Activated B cell treated with CpG ODN at 0.5 μM for 24 hours (primary cell): ENCODE measurements at regions of chr11 and their contacts with region 1.

Region 1: DNA sequence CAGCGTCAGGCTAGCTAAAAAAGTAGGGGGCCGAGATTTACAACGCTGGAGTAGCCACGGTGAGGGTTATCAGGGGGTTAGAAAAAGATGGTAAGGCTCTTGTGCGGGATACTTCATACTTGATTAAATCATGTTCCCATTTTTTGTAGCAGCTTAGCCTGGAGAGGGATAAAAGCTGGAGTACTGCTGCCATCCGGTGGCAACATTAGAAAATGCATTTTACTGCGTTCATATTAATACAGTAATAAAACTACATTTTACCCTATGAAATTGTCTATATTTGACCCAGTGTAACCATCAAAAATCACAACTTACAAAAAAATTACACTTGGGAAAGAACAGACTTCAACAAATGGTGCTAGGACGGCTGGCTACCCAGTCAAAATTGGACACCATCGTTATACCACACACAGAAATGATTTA is 17.3 kb downstream of the RPUSD4 start:
- DNase-seq: no peak
- ATAC-seq: peak; percentile 21
- H3K4me3 Mint-ChIP-seq: no peak overlapping the region
- H3K27ac Mint-ChIP-seq: no peak overlapping the region
- H3K4me1 Mint-ChIP-seq: peaks cover 3% of the 10 kb centered on the region
- H3K27me3 Mint-ChIP-seq: no peaks in the 10 kb centered on the region
- CTCF ChIP-seq: no peak

Region 2: DNA sequence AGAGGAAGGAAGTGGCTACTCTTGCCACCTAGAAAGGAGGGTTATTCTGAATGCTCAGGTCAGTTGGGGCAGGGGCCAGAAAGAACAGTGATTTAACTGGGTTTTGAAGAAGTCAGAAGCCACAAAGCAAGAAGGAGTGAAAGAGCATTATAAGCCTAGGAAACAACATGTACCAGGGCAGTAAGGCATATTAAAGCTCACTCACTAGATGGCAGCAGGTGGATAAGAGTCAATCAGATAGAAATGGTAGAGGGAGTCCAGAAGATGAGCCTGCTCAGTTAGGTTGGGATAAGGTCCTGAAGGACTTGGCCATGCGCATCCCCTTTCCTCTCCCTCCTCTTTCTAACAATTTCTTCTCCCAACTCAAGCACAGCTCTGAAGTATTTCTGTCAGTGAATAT is 470.0 kb before region 1 on chr11:
- CTCF ChIA-PET with region 1: no interaction called
- POLR2A ChIA-PET with region 1: no interaction called
- intact Hi-C with region 1: loop called (anchors 10 kb)
- DNase-seq: no peak
- ATAC-seq: no peak
- H3K4me3 Mint-ChIP-seq: no peak overlapping the region
- H3K27ac Mint-ChIP-seq: no peak overlapping the region
- H3K4me1 Mint-ChIP-seq: no peaks in the 10 kb centered on the region
- H3K27me3 Mint-ChIP-seq: peaks cover 14% of the 10 kb centered on the region
- CTCF ChIP-seq: no peak

Region 3: DNA sequence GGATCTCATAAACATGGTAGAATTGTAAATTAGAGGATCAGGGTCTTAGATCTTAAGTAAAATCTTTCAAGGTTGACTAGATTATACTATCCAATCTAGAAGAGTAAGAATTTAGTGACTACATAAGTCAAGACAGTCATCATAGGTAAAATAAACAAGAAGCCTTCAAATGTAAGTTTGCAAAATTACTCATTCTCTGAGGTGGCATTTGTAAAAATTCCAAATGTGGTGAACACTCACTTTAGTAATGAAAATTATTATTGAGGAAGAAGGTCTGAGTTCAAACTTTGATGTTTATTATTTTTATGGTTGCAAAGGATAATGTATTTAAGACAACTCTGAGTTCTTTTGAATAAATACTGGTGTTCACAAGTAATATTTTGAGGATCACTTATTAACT is 302.1 kb before region 1 on chr11:
- CTCF ChIA-PET with region 1: no interaction called
- POLR2A ChIA-PET with region 1: no interaction called
- intact Hi-C with region 1: no loop called
- DNase-seq: no peak
- ATAC-seq: no peak
- H3K4me3 Mint-ChIP-seq: no peak overlapping the region
- H3K27ac Mint-ChIP-seq: no peak overlapping the region
- H3K4me1 Mint-ChIP-seq: peaks cover 12% of the 10 kb centered on the region
- H3K27me3 Mint-ChIP-seq: peaks cover 3% of the 10 kb centered on the region
- CTCF ChIP-seq: no peak

Region 4: DNA sequence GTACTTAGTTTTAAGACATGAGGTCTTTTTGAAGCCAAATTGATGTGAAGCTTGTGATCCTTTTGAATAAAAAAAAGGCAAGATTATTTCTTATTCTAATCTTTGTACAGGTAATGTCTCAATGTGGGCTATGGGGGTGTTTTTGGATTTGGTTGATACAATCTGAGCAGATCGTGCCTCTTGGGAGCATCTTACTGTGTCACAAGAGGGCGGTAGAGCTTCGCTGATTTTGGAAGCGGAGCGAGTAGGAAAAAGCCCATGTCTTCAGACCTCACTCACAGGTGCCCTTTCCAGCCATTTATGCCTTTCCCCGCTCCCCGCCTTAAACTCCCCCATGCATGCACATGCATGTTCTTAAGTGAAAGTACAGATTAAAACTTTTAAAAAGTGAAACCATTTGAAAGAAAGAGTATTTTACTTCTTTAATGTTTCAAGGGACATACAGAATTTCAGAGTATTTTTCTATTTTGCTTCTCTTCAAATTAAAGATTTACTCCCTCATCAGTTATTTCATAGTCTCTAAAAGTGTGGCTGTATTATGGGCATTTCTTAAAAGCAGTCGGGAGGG is 271.0 kb before region 1 on chr11:
- CTCF ChIA-PET with region 1: interaction called, 7 read pairs
- POLR2A ChIA-PET with region 1: no interaction called
- intact Hi-C with region 1: loop called (anchors 1 kb)
- DNase-seq: no peak
- ATAC-seq: no peak
- H3K4me3 Mint-ChIP-seq: no peak overlapping the region
- H3K27ac Mint-ChIP-seq: no peak overlapping the region
- H3K4me1 Mint-ChIP-seq: no peaks in the 10 kb centered on the region
- H3K27me3 Mint-ChIP-seq: peaks cover 15% of the 10 kb centered on the region
- CTCF ChIP-seq: peak; percentile 21

Region 5: DNA sequence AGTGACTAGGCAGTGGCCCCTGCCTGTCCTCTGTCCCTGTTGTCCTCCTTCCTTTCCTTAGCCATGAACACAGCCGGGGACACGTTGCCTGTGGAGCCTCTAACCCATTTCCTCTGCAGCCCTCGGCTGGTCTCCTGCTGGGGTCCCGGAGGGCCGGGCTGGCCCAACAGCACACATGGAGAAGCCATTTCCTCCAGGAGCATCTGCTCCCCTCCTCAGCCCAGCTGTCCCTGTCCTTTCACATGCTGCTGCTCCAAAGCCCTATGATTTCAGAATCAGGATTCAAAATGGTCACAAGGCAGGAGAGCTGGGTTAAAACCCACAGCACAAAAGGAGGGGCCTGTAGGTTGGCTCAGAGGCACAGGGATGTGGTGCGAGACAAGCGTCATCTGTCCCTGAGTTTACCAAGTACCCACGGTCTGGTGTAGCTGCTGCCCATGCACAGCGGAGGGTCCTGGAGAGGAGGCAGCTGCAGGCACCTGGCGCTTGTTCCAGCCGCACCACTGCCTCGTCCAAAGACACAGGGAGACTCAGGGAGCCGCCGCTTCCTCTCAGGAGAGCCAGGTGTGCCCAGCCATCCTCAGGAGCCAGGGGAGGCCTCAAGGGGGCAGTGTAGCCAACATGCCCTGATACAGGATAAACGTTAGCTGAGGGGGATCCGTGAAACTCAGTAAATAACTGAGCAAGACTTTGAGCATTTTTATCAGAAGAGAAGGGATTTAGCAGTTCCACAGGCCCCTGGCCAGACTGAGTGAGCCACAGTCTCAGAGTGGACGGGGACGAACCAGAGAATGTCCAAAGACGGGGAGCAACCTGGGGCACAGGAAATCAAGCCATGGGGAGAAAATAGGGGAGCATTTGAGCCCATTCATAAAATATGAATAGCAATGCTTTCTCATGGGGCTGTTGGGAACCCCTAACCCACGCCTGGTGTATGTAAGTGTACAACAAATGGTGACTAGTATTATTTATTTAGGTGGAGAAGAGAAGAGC is 252.2 kb before region 1 on chr11:
- CTCF ChIA-PET with region 1: interaction called, 3 read pairs
- POLR2A ChIA-PET with region 1: no interaction called
- intact Hi-C with region 1: loop called (anchors 1 kb)
- DNase-seq: no peak
- ATAC-seq: no peak
- H3K4me3 Mint-ChIP-seq: no peak overlapping the region
- H3K27ac Mint-ChIP-seq: no peak overlapping the region
- H3K4me1 Mint-ChIP-seq: no peaks in the 10 kb centered on the region
- H3K27me3 Mint-ChIP-seq: no peaks in the 10 kb centered on the region
- CTCF ChIP-seq: no peak

Region 6: DNA sequence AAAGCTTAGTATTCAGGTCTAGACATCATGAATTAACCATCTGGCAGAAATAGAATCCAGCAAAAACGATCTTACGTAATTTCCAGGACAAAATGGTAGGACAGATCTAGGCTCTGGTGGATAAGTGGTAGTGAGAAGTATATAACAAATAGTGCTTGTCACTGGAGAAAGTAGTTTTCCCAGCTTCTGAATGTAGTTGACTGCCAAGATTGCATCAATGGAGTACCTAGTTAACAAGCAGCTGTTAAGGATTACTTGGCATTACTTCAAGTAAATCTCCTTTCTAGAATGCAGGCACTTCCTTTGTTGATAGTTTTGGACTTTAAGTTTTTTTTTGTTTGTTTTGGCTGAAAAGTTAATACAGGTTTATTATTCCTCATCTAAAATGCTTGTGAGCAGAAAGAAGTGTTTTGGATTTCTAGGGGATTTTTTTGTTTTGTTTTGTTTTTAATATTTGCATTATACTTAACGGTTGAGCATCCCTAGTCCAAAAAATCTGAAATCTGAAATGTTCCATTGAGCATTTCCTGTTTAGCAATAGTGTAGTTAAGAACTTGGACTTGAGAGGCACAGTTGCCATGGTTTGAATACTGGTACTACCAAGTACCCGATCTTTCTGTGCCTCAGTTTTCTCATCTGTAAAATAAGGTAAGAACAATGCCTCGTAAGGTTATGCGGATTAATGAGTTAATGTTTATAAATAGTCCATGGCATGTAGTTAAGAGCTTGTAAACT is 37.8 kb after region 1 on chr11:
- CTCF ChIA-PET with region 1: no interaction called
- POLR2A ChIA-PET with region 1: no interaction called
- intact Hi-C with region 1: no loop called
- DNase-seq: no peak
- ATAC-seq: no peak
- H3K4me3 Mint-ChIP-seq: no peak overlapping the region
- H3K27ac Mint-ChIP-seq: no peak overlapping the region
- H3K4me1 Mint-ChIP-seq: no peaks in the 10 kb centered on the region
- H3K27me3 Mint-ChIP-seq: no peaks in the 10 kb centered on the region
- CTCF ChIP-seq: no peak